Lower lobe of right lung (tissue), 2 donors: ENCODE measurements at regions of chr7 and their contacts with region 1.

Region 1: DNA sequence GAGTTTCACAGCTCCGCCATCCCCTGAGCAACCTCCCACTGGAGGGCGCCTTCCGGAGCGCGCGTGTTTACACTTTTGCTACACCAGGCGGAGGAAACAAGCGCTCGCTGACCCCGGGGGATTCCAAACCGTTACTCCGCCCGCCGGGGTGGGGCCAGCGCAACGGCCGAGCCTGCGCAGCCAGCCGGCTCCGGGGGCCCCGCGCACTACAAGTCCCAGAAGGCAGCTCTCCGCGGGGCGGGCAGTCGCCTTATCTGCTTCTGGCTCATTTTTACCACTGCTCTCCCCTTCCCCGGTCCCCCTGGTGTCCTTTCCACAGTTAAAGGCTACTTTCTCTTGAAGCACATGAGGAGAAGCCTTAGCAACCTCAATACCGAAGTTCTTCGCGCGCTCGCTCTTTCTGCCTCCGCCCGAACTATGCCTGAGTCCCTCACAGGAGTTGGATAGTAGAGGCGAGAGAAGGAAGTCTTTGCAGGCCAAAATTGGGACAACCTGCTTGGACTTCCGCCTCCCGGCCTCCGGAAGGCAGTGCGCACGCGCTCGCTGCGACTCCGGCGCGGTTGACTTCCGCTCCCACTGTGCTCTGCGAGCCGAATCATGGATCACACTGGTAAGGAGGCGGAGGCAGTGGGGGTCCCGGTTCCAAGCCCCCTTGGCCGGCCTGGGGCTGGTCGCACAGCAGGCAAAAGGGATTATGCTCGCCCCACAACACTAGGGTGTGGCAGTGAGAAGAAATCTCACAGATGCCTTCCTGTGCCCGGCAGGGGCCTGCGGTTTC is at the start of gene CBLL1:
- DNase-seq: peak; percentile 98
- ATAC-seq: peak; percentile 99
- H3K4me3 ChIP-seq: peak within 1 kb of the TSS; percentile 87
- H3K27ac ChIP-seq: peak within 1 kb of the TSS; percentile 96
- H3K4me1 ChIP-seq: peaks cover 41% of the 10 kb centered on the region
- H3K27me3 ChIP-seq: no peaks in the 10 kb centered on the region
- CTCF ChIP-seq: peak; percentile 75
- total RNA-seq, gene CBLL1: 20.9 TPM

Region 2: GRCh38 chr7:107879400-107880035 is 135.8 kb after region 1 on chr7:
- intact Hi-C with region 1: loop called (anchors 10 kb)
- DNase-seq: no peak
- ATAC-seq: peak; percentile 80 to 83
- H3K4me3 ChIP-seq: no peak overlapping the region
- H3K27ac ChIP-seq: no peak overlapping the region
- H3K4me1 ChIP-seq: peaks cover 26% of the 10 kb centered on the region
- H3K27me3 ChIP-seq: no peaks in the 10 kb centered on the region
- CTCF ChIP-seq: peak; percentile 72